ENCODE measurements at regions of chr3 and their contacts with region 1.

Region 1: DNA sequence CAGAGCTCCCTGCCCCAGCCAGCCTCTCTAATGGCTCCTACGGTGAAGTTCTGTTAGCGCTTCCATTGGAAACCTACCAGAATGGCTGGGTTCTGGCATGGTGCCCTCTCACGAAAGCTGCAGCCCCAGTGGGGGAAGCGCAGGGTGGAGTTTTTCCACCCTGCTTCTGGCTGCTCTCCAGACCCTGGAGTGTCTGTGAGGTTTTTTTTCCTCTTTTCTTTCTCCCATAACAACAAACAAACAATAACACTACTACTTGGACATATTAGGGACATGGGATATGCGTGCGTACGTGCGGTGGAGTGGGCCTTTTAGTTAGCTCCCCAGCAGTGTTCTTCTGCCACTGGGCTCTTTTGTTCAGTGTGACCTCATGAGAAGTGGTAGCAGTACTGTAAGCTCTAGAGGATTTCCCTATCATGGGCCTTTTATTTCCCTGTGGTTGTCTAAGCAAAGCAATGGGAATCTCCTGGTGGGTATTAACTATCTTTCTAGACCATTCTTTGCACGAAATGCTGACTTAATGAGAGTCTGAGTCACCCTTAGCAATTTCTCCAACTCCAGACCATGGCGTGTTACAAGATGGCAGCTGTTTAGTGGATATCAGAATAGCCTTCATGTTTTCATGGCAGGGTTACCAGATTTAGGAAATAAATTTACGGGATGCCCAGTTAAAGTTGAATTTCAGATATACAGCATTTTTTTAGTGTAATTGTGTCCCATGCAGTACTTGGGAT is 161.9 kb downstream of the FNDC3B start:
- DNase-seq: peak; percentile 89 to 92 (median 91)
- ATAC-seq: peak; percentile 87 to 93 (median 88)
- H3K4me3 ChIP-seq: peak overlapping the region in 2 of 12 donors; percentile 0 to 13
- H3K27ac ChIP-seq: peak overlapping the region; percentile 60 to 91 (median 78)
- H3K4me1 ChIP-seq: peaks cover 10 to 66% (median 51%) of the 10 kb centered on the region in 12 donors
- H3K27me3 ChIP-seq: no peaks in the 10 kb centered on the region
- CTCF ChIP-seq: no peak
- POLR2A ChIP-seq: no peak

Region 2: GRCh38 chr3:171622126-171622525 is 579.2 kb before region 1 on chr3:
- intact Hi-C with region 1: no loop called
- DNase-seq: no peak
- ATAC-seq: no peak
- H3K4me3 ChIP-seq: no peak overlapping the region
- H3K27ac ChIP-seq: no peak overlapping the region
- H3K4me1 ChIP-seq: peaks cover 0 to 10% (median 0%) of the 10 kb centered on the region in 12 donors
- H3K27me3 ChIP-seq: no peaks in the 10 kb centered on the region
- CTCF ChIP-seq: no peak
- POLR2A ChIP-seq: no peak

Region 3: GRCh38 chr3:171950373-171950772 is 250.9 kb before region 1 on chr3:
- intact Hi-C with region 1: no loop called
- DNase-seq: no peak
- ATAC-seq: no peak
- H3K4me3 ChIP-seq: no peak overlapping the region
- H3K27ac ChIP-seq: no peak overlapping the region
- H3K4me1 ChIP-seq: peaks cover 0 to 9% (median 0%) of the 10 kb centered on the region in 12 donors
- H3K27me3 ChIP-seq: no peaks in the 10 kb centered on the region
- CTCF ChIP-seq: no peak
- POLR2A ChIP-seq: no peak

Region 4: DNA sequence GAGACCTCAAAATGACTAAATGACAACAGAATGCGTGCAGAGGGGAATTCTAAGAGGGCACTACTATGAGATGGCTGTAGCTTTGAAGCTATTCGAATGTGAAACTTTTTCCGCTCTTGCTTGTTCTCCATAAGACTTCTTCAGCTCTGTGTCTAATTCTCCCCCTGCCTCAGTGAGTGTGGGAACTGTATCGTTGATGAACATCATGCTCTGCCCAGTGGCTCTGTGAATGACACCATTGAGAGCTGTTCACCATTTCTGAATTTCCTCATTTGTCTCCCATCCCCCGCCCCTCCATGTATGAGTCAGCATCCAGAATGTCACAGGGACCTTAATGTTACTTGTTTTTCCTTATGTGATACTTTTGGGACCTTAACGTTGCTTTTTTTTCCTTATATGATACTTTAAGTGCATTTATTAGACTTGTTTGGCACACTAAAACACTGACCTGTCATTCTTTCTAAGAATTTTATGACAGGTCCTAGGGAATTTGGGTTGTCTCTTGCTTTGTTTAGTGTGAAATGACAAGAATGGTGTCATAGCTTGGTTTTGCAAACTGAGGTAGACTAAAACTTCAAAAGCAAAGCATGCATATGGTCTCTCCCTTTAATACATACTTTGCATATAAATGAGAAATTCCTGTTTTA is 62.4 kb before region 1 on chr3:
- intact Hi-C with region 1: loop called in 1 of 10 experiments (anchors 5 kb)
- DNase-seq: peak in 4 of 5 donors; percentile 56 to 63 (median 56)
- ATAC-seq: peak; percentile 28 to 75 (median 58)
- H3K4me3 ChIP-seq: no peak overlapping the region
- H3K27ac ChIP-seq: peak overlapping the region in 11 of 12 donors; percentile 16 to 92 (median 68)
- H3K4me1 ChIP-seq: peaks cover 27 to 100% (median 77%) of the 10 kb centered on the region in 12 donors
- H3K27me3 ChIP-seq: no peaks in the 10 kb centered on the region
- CTCF ChIP-seq: no peak
- POLR2A ChIP-seq: no peak

Region 5: GRCh38 chr3:172153335-172153861 is 47.9 kb before region 1 on chr3:
- intact Hi-C with region 1: loop called in 1 of 10 experiments (anchors 10 kb)
- DNase-seq: peak; percentile 89 to 96 (median 91)
- ATAC-seq: peak; percentile 96 to 100 (median 98)
- H3K4me3 ChIP-seq: no peak overlapping the region
- H3K27ac ChIP-seq: peak overlapping the region; percentile 69 to 90 (median 86)
- H3K4me1 ChIP-seq: peaks cover 20 to 80% (median 58%) of the 10 kb centered on the region in 12 donors
- H3K27me3 ChIP-seq: no peaks in the 10 kb centered on the region
- CTCF ChIP-seq: no peak
- POLR2A ChIP-seq: peak in 1 of 2 donors; percentile 55

Region 6: DNA sequence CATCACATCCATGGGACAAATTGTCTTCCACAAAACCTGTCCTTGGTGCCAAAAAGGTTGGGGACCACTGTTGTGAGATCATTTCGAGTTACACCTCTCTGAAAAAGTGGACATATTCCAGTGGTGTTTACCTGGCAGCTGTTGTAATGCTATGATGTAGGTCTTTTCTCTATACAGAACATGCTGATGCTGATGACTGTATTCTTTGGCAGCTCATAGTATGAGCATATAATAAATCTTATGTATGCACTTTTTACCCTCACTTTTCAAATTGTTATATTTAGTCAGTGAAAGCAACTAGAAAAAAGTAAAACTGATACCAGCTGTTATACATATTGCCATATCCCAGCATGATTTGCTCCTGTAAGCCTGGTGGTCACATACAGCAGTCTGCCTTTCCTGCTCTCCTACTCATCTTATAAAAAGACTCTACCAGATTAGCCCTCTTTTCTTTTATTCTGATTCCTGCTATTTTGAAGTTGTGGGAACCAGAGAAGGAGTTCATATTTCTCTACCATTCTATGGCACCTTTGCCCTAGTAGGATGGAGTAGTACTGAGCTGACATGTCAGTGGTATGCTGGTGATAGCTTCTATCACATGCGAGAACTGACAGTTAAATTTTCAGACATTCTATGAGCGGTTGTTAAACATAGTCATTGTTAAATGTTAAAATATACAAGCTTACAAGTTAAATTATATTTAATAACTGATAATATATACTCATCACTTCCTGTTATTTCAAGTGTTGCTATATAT is 33.2 kb before region 1 on chr3:
- intact Hi-C with region 1: no loop called
- DNase-seq: no peak
- ATAC-seq: peak in 1 of 4 donors; percentile 53
- H3K4me3 ChIP-seq: no peak overlapping the region
- H3K27ac ChIP-seq: peak overlapping the region in 1 of 12 donors; percentile 4
- H3K4me1 ChIP-seq: peaks cover 0 to 70% (median 41%) of the 10 kb centered on the region in 12 donors
- H3K27me3 ChIP-seq: no peaks in the 10 kb centered on the region
- CTCF ChIP-seq: no peak
- POLR2A ChIP-seq: no peak

Region 7: GRCh38 chr3:172181932-172182586 is 19.2 kb before region 1 on chr3:
- intact Hi-C with region 1: no loop called
- DNase-seq: no peak
- ATAC-seq: peak in 3 of 4 donors; percentile 62 to 73 (median 70)
- H3K4me3 ChIP-seq: no peak overlapping the region
- H3K27ac ChIP-seq: peak overlapping the region in 3 of 12 donors; percentile 2 to 17 (median 14)
- H3K4me1 ChIP-seq: peaks cover 3 to 84% (median 44%) of the 10 kb centered on the region in 12 donors
- H3K27me3 ChIP-seq: no peaks in the 10 kb centered on the region
- CTCF ChIP-seq: no peak
- POLR2A ChIP-seq: no peak

Region 8: DNA sequence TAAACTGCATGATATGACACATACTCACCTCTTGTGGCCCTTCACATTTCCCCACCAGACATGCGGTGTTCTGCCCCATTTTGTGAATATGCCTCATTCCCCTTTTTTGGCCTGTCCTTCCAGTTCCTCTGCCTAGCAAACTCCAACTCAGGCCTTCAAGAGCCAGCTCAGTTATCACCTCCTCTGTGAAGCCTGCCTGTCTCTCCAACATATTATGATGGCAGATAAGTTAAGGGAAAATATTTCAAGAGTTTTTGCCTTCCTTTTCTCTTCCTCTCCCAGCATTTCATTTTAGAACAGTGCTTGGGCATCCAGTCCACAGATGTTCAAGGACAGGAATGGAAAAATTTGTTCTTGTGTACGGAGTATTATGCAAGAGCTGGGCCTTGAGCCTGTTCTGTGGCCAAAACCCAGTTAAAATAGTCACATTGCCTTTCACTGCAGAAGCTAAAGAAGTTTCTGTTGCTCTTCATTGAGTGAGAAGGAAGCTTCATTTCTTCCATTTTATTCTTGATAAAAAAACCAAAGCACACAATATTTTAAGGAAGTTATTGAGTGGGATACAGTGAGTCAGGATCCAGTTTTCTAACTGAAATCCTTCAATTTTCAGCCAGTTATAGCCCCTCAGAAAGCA is 54.9 kb after region 1 on chr3:
- intact Hi-C with region 1: loop called in 1 of 10 experiments (anchors 5 kb)
- DNase-seq: peak in 3 of 5 donors; percentile 35 to 44 (median 42)
- ATAC-seq: peak; percentile 67 to 84 (median 78)
- H3K4me3 ChIP-seq: no peak overlapping the region
- H3K27ac ChIP-seq: peak overlapping the region; percentile 27 to 84 (median 74)
- H3K4me1 ChIP-seq: peaks cover 7 to 68% (median 52%) of the 10 kb centered on the region in 12 donors
- H3K27me3 ChIP-seq: no peaks in the 10 kb centered on the region
- CTCF ChIP-seq: no peak
- POLR2A ChIP-seq: no peak